Right ventricle myocardium inferior (tissue), 1 donor: ENCODE measurements at regions of chr6 and their contacts with region 1.

Region 1: DNA sequence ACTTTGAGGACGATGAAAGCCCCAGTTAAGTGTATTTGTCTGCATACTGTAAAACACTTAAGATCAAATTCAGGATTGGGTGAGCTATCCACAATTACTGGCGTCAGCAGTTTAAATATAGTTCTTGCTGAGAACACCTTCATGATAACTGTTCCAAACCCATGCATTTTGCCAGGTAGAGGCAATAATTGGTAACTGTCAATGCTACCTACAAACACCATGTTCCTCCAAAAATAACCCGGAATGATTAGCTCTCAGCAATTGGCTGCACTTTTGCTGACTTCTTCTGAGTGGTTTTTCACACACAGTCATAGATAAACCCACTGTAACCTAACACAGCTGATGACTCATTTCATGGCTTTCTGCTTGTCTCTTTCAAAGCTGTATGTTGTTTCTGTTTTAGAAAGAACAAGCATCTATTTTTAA is 1358.6 kb upstream of the GJE1 start:
- DNase-seq: no peak
- ATAC-seq: peak; percentile 95

Region 2: GRCh38 chr6:140867336-140867735 is 93.2 kb after region 1 on chr6:
- intact Hi-C with region 1: no loop called
- DNase-seq: no peak
- ATAC-seq: no peak

Region 3: DNA sequence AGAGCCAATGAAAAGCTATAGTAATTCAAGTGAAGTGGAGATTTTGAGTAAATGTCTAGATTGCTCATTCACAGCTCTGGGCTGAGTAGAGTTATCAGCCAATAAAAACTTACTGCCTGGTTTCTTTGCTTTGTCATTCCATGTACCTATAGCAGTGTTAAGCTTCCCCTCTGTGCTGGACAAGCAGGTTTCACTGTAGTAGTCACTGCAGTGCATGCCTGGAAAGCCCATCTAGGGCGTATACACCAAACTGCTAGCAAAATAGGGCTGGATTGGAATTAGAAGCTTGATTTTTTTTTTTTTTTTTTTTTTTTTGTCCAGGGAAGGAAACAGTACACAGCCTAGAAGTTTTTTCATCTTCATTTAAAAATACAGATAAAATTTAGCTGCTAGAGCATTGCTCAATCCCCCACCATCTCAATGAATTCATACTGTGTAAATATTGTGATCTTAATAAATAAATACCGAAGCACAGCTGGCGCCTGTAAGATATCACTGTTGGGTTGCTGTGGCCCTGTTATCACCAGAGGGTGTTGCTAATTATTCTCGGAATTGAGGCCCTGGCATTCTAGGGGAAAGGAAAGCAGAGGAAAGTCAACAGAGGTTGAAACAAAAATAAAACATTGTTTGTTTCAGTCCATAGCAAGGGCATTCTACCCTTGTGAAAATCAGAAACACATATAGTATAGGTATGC is 390.1 kb after region 1 on chr6:
- intact Hi-C with region 1: loop called (anchors 5 kb)
- DNase-seq: no peak
- ATAC-seq: peak; percentile 91

Region 4: GRCh38 chr6:141464490-141464889 is 690.4 kb after region 1 on chr6:
- intact Hi-C with region 1: loop called (anchors 1 kb)
- DNase-seq: no peak
- ATAC-seq: peak; percentile 85

Region 5: DNA sequence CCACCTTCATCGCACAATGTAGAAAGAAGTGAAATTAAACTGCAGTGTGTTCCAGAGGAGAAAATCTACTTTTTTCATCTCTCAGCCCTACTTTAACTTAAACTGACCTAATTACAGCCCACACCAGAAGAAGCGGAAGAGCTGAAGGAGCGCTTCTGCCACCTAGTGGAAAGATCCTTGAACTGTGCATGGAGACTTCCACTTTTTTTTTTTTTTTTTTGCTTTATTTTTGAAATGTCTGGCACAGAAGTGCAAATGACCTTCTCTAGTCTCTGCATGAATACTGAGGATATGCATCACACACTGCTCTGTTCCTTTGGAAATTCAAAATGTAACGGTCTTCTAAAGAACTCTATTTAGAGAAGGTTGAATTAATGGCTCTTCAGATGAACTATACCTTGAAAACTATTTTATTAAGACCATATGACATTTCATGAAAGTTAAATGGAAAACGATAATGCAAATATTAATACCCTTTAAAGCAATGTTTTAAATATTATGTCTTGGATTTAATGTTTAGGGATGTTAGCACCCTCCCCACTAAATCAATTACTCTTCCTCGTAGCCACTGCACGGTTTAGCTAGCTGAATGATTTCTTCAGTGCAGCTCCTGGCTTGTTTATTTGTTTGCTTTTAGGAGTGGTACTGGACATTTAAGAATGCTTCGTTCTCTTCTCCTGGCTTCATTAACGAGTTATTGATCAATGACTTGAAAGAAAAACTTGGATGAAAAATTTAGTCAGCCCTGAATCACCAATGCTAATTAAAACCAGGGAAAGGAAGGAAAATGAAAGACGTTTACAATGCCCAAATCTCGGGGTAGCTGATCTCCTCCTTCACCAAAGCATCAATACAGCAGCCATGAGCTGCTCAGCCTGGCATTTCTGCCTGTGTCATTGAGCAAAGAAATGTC is 789.0 kb after region 1 on chr6:
- intact Hi-C with region 1: loop called (anchors 5 kb)
- DNase-seq: peak; percentile 69
- ATAC-seq: peak; percentile 93